Activated CD4-positive, alpha-beta T cell treated with anti-CD3 and anti-CD28 coated beads for 36 hours (primary cell): ENCODE measurements at regions of chr2 and their contacts with region 1.

Region 1: DNA sequence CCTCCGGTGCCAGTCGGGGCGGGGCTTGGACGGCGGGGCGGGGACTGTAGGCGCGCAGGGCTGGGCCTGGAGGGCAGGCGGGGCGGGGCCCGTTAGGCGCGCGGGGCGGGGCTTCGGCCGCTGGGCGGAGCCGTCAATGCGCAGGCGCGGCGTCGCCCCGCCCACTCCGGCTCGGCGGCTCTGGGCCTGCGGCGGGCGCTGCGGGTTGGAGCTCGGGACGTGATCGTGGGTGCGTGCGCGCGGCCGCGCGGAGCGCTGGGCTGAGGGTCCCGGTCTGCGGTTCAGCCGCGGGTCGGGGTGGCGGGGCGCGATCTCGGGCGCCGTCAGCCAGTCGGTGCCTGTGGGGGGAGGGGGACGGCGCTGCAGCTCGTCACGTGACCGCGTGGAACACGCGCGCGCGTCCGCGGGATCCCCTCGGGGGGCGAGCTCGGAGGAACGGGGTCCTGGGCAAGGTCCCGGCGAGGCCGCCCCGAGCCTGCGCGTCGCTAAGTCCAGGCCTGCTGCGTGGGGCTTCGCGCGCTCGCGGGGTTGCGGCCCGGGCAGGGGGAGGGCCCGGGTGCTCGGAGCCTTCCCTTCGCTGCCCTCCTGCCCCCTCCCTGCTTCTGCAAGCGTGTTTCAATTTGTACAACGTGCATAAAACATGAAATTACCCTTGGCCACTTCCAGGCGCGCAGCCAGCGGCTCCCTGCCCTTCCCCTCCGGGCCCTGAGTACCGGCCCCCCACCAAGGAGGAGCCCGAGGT is at the start of gene D2HGDH:
- DNase-seq: peak; percentile 98
- ATAC-seq: peak; percentile 92
- H3K4me3 Mint-ChIP-seq: peak within 1 kb of the TSS; percentile 79
- H3K27ac Mint-ChIP-seq: peak within 1 kb of the TSS; percentile 70
- H3K4me1 Mint-ChIP-seq: peaks cover 57% of the 10 kb centered on the region
- H3K27me3 Mint-ChIP-seq: no peaks in the 10 kb centered on the region
- total RNA-seq, gene D2HGDH: 18.2 to 34.1 TPM

Region 2: DNA sequence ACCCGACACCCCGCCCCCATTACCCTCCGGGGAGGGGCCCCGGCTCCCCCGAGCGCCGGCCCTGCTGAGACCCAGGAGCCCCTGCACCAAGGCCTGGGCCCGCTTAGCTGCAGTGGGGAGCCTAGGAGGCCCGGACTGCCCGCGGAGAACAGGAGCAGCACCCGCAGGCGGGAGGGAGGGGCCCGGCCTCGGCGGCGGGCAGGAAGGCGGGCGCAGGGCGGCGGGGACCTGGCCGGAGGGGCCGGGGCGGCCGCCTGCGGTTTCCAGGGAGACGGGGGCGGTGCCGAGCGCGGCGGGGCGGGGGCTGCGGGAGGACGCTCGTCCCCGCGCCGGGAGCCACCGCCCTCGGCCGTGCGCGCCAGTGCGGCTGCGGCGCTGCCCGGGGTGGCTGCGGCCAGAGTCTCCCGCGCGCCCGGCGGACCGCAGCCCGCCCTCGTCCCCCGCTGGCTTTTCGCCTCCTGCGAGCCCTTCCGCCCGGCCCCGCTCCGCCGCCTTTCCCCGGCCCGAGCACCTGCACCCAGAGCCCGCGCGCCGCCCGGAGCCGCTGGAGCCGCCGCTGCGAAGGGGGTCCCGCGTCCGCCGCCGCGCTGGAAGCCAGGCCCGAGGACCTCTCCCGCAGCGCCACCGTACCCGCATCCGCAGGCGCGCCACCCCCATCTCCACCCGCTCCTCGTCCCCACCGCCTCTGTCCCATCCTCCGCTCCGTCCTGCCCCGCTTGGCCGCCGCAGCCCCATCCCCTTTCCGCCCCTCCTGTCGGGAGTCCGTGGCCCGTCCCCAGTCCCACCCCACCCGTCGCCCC is 1282.0 kb before region 1 on chr2:
- CTCF ChIA-PET with region 1: no interaction called
- POLR2A ChIA-PET with region 1: no interaction called
- intact Hi-C with region 1: no loop called
- DNase-seq: peak; percentile 22
- ATAC-seq: peak; percentile 23
- H3K4me3 Mint-ChIP-seq: peak overlapping the region; percentile 38
- H3K27ac Mint-ChIP-seq: no peak overlapping the region
- H3K4me1 Mint-ChIP-seq: peaks cover 4% of the 10 kb centered on the region
- H3K27me3 Mint-ChIP-seq: peaks cover 30% of the 10 kb centered on the region

Region 3: DNA sequence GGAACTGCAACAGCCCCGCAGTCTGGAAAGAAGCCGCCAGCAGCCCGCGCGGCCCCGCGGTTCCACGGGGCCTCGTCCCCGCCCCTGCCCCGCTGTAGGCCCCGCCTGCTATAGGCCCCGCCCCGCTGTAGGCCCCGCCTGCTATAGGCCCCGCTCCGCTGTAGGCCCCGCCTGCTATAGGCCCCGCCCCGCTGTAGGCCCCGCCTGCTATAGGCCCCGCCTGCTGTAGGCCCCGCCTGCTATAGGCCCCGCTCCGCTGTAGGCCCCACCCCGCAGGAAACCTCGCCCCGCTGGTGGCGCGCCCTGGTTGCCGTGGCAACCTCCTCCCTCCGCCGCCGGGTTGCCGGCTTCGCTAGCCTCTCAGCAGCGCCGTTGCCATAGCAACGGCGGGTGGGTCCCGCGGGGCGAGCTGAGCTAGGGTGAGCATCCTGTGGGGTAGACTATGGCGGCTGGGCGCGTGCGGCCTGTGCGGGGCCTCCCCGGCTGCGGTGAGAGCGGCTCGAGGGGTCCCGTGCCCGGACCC is 902.4 kb before region 1 on chr2:
- CTCF ChIA-PET with region 1: no interaction called
- POLR2A ChIA-PET with region 1: no interaction called
- intact Hi-C with region 1: loop called in 1 of 2 experiments (anchors 1 kb)
- DNase-seq: peak; percentile 98
- ATAC-seq: peak; percentile 96
- H3K4me3 Mint-ChIP-seq: peak overlapping the region; percentile 63
- H3K27ac Mint-ChIP-seq: no peak overlapping the region
- H3K4me1 Mint-ChIP-seq: peaks cover 2% of the 10 kb centered on the region
- H3K27me3 Mint-ChIP-seq: peaks cover 19% of the 10 kb centered on the region

Region 4: DNA sequence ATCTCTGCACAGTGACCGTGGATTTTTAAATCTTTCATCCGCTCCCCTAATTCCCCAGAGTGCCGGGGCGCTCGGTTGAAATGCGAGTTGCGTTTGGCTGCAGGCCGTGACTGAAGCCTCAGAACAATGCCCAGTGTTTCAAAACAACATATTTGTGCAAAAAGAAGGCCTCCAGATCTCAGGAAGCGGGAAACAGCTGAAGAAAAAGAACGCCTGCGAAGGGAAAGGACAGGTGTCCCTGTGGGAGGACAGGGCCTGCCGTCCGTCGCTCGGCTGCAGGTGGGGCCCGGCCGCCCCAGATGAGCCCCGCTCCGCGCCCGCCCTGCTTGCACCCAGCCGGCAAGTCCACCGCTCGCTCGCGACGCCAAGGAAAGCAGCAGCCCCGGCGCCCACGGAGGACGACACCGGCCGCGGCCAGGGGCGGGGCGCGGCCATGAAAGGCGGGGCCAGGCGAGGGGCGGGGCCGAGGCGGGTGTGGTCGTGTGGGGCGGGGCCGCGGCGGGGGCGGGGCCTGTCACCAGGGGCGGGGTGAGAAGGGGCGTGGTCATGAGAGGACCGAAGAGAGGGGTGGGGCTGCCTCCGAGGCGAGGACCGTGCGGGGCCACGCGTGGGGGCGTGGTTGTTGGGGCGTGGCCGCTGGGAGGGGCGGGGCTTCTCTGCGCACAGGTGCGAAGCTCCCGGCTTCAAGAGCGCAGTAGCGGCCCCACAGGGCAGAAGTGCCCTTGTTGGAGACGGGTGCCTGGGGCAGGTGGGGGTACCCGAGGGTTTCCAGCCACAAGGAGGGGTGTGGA is 193.7 kb before region 1 on chr2:
- CTCF ChIA-PET with region 1: no interaction called
- POLR2A ChIA-PET with region 1: no interaction called
- intact Hi-C with region 1: loop called in 1 of 2 experiments (anchors 1 kb)
- DNase-seq: peak; percentile 90
- ATAC-seq: peak; percentile 92
- H3K4me3 Mint-ChIP-seq: peak overlapping the region; percentile 31
- H3K27ac Mint-ChIP-seq: no peak overlapping the region
- H3K4me1 Mint-ChIP-seq: peaks cover 4% of the 10 kb centered on the region
- H3K27me3 Mint-ChIP-seq: peaks cover 14% of the 10 kb centered on the region

Region 5: GRCh38 chr2:241665727-241666440 is 68.8 kb before region 1 on chr2:
- CTCF ChIA-PET with region 1: no interaction called
- POLR2A ChIA-PET with region 1: no interaction called
- intact Hi-C with region 1: loop called in 1 of 2 experiments (anchors 1 kb)
- DNase-seq: no peak
- ATAC-seq: no peak
- H3K4me3 Mint-ChIP-seq: no peak overlapping the region
- H3K27ac Mint-ChIP-seq: peak overlapping the region; percentile 14
- H3K4me1 Mint-ChIP-seq: peaks cover 8% of the 10 kb centered on the region
- H3K27me3 Mint-ChIP-seq: no peaks in the 10 kb centered on the region

Region 6: DNA sequence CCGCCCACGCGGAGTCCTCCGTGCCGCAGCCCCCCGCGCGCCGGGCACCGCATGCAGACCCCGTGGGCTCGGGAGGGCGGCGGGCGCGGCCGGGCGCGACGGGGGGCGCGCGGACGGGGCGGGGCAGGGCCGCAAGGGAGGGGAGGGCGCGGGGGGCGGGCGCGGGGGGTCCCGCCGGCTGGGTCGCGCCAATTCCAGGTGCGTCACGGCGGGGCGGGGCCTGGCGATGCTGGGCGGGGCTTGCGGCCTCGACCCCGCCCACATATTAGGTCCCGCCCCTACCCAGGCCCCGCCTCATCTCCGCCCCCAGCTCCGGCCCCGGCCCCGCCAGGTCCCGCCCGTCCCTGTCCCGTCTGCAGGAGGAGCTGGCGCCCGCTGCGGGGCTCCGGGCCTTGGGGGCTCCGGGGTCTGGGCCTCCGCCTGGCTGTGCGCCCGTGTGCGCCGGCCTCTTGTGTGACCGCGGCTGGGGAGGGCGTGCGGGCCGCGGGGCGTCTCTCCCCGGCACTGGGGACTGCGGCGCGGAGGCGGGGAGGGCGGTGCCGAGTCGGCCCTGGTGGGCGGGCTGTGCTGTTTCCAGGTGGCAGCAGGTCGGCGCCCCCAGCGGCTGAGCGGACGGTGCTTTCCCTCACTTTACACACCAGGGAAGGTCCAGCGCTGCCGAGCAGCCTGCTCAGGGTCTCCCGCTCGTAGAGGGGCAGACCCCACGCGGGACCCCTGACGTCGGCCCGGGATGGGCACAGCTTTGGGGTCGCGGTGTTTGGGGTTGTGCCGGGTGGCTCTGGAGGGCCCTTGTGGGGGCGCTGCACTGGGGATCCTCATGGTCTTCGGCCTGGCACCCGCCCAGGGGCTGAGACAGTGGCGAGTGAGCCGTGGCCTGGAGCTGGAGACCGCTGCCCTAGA is 32.3 kb before region 1 on chr2:
- CTCF ChIA-PET with region 1: interaction called, 15 read pairs
- POLR2A ChIA-PET with region 1: interaction called, 19 read pairs
- intact Hi-C with region 1: loop called (anchors 1 kb)
- DNase-seq: peak; percentile 94
- ATAC-seq: peak; percentile 70
- H3K4me3 Mint-ChIP-seq: peak overlapping the region; percentile 86
- H3K27ac Mint-ChIP-seq: peak overlapping the region; percentile 75
- H3K4me1 Mint-ChIP-seq: peaks cover 29% of the 10 kb centered on the region
- H3K27me3 Mint-ChIP-seq: no peaks in the 10 kb centered on the region

Region 7: GRCh38 chr2:241844066-241844728 is 109.6 kb after region 1 on chr2:
- CTCF ChIA-PET with region 1: interaction called, 3 read pairs
- POLR2A ChIA-PET with region 1: no interaction called
- intact Hi-C with region 1: loop called in 1 of 2 experiments (anchors 1 kb)
- DNase-seq: peak; percentile 95
- ATAC-seq: peak; percentile 82
- H3K4me3 Mint-ChIP-seq: peak overlapping the region; percentile 67
- H3K27ac Mint-ChIP-seq: peak overlapping the region; percentile 85
- H3K4me1 Mint-ChIP-seq: peaks cover 36% of the 10 kb centered on the region
- H3K27me3 Mint-ChIP-seq: no peaks in the 10 kb centered on the region

Region 8: GRCh38 chr2:242088471-242089212 is 354.0 kb after region 1 on chr2:
- CTCF ChIA-PET with region 1: no interaction called
- POLR2A ChIA-PET with region 1: no interaction called
- intact Hi-C with region 1: loop called in 1 of 2 experiments (anchors 2 kb)
- DNase-seq: peak; percentile 95
- ATAC-seq: peak; percentile 96
- H3K4me3 Mint-ChIP-seq: peak overlapping the region; percentile 82
- H3K27ac Mint-ChIP-seq: peak overlapping the region; percentile 55
- H3K4me1 Mint-ChIP-seq: peaks cover 37% of the 10 kb centered on the region
- H3K27me3 Mint-ChIP-seq: peaks cover 3% of the 10 kb centered on the region